ENCODE measurements at regions of chr15 and their contacts with region 1.

Region 1: DNA sequence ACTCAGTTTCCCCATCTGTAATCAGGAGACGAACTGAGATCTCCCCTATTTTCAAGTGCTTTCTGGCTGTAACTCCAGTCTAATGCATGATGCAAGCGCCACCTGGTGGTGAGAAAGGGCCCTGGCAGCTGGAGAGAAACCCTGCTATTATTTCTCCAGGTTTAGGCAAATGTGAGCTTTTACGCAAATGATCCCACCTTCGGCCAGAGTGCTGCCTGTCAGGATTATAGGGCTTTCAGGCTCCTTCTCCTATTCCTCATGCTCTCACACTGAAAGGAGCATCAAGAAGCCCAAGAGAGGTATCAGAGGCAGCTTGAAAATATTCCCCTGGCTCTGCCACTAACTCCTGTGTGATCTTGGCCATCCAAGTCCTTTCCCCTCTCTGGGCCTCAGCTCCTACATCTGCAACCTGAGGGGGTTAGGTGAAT is 93.9 kb upstream of the RASGRF1 start:
- DNase-seq: peak; percentile 64
- H3K4me3 ChIP-seq: no peak overlapping the region
- H3K27ac ChIP-seq: no peak overlapping the region
- H3K4me1 ChIP-seq: no peaks in the 10 kb centered on the region
- H3K27me3 ChIP-seq: peaks cover 25% of the 10 kb centered on the region
- CTCF ChIP-seq: peak; percentile 99

Region 2: GRCh38 chr15:78790030-78790429 is 394.4 kb before region 1 on chr15:
- intact Hi-C with region 1: no loop called
- DNase-seq: no peak
- H3K4me3 ChIP-seq: no peak overlapping the region
- H3K27ac ChIP-seq: peak overlapping the region; percentile 35
- H3K4me1 ChIP-seq: peaks cover 28% of the 10 kb centered on the region
- H3K27me3 ChIP-seq: no peaks in the 10 kb centered on the region
- CTCF ChIP-seq: no peak

Region 3: GRCh38 chr15:79004336-79004735 is 180.1 kb before region 1 on chr15:
- intact Hi-C with region 1: no loop called
- DNase-seq: no peak
- H3K4me3 ChIP-seq: no peak overlapping the region
- H3K27ac ChIP-seq: no peak overlapping the region
- H3K4me1 ChIP-seq: peaks cover 5% of the 10 kb centered on the region
- H3K27me3 ChIP-seq: no peaks in the 10 kb centered on the region
- CTCF ChIP-seq: no peak

Region 4: GRCh38 chr15:79028411-79028964 is 156.0 kb before region 1 on chr15:
- intact Hi-C with region 1: loop called (anchors 2 kb)
- DNase-seq: no peak
- H3K4me3 ChIP-seq: no peak overlapping the region
- H3K27ac ChIP-seq: no peak overlapping the region
- H3K4me1 ChIP-seq: no peaks in the 10 kb centered on the region
- H3K27me3 ChIP-seq: peaks cover 13% of the 10 kb centered on the region
- CTCF ChIP-seq: peak; percentile 83

Region 5: DNA sequence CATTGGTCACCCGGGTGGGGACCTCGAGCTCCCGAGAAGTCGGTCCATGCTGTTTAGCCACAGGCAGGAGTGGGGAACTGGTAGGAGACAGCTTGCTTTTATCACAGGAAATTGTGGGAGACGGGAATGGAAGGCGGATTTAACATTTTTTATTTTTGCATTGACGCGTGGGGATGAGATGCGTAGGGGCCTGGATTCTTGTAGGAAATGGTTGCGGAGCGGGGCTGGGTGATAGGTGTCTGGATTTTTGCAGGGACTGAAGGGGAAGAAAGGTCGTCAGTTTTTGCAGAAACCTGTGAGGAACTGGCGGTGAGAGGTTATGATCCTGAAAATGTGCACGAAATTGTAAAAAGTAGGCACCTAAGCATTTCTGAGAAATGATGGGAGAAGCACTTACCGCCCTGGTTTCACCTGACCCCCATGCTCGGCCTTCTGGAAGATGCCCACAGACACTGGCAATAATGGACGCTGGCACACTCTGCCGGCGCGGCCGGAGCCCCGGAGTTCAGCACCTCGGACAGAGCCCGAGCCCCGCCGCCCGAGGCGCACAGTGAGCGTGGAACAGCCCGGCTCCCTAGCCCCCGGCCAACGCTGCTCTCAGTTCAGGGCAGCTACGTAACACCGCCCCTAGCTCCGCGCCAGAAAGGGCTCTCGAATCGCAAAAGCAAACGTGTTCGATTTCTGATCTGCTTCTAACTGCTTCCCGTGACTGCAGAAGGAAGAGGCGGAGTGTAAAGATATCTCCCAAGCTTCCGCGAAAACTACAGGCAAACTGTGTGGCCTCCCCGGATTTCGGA is 99.0 kb after region 1 on chr15:
- intact Hi-C with region 1: no loop called
- DNase-seq: peak; percentile 35
- H3K4me3 ChIP-seq: no peak overlapping the region
- H3K27ac ChIP-seq: no peak overlapping the region
- H3K4me1 ChIP-seq: no peaks in the 10 kb centered on the region
- H3K27me3 ChIP-seq: peaks cover 88% of the 10 kb centered on the region
- CTCF ChIP-seq: no peak

Measured in left ventricle myocardium inferior (tissue), 1 donor.